Aorta (tissue), 5 donors: ENCODE measurements at regions of chr12 and their contacts with region 1.

Region 1: DNA sequence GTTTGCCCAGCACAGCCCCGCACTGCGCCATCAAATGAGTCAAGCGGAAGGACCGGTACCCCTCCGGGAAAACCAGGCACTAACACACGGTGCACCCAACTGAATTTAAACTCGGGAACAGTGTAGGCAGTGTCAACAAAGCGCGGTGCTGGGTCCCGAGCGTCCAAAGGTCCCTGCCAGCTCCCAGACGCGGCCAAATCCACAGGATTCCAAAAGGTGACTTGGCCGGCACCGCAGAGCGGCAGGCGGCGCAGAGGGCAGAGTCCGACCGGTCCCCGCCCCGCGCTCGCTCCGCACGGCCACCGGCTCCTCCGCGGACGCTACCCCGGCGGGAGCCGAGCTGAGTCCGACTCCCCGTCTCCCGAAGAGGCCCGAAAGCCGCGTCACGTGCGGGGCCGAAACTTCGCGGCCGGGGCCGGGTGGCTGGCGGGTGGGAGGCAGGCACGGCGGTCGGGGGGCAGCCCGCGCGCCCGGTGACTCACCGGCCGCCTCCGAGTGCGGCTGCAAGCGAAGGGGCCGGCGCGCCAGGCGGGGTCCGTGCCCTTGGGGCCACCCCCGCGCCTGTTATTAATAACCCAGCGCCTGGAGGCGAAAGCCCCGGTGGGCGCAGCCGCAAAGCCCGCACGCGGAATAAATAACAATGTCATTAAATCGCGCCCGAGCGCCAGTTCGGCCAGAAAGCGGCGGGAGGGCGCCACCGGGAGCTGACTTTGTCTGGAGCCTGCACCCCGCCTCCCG is 863 bp downstream of the DENND5B start:
- DNase-seq: peak; percentile 69 to 93
- ATAC-seq: peak; percentile 82
- H3K4me3 ChIP-seq: peak overlapping the region; percentile 98 to 99
- H3K27ac ChIP-seq: peak overlapping the region; percentile 52 to 95
- H3K4me1 ChIP-seq: no peaks in the 10 kb centered on the region
- H3K27me3 ChIP-seq: no peaks in the 10 kb centered on the region

Region 2: DNA sequence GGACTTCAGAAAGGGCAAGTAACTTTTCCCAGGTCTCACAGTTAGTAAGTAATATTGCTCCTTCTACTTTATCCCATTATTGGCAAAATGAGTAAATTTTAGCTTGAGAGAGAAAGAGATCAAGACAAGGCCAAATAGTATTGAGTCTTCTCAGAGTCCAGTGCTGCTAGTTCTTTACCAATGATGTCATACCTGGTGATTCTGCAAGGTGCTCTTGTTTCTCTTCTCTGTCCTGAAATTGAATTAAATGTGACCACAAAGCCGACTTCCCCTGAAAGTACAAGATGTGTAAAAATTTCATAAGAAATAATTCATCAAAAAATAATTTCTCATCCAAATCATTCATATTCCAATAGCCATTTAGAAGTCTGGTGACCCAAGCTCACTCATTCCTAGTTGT is 166.7 kb before region 1 on chr12:
- intact Hi-C with region 1: no loop called
- DNase-seq: no peak
- ATAC-seq: no peak
- H3K4me3 ChIP-seq: no peak overlapping the region
- H3K27ac ChIP-seq: no peak overlapping the region
- H3K4me1 ChIP-seq: no peaks in the 10 kb centered on the region
- H3K27me3 ChIP-seq: no peaks in the 10 kb centered on the region

Region 3: GRCh38 chr12:31506515-31507306 is 83.4 kb before region 1 on chr12:
- intact Hi-C with region 1: loop called in 1 of 2 experiments (anchors 10 kb)
- DNase-seq: no peak
- ATAC-seq: no peak
- H3K4me3 ChIP-seq: no peak overlapping the region
- H3K27ac ChIP-seq: no peak overlapping the region
- H3K4me1 ChIP-seq: peaks cover 0 to 2% of the 10 kb centered on the region in 2 donors
- H3K27me3 ChIP-seq: no peaks in the 10 kb centered on the region

Region 4: GRCh38 chr12:31629756-31630732 is 40.0 kb after region 1 on chr12:
- intact Hi-C with region 1: loop called in 1 of 2 experiments (anchors 5 kb)
- DNase-seq: peak in 1 of 2 donors; percentile 57
- ATAC-seq: peak; percentile 53
- H3K4me3 ChIP-seq: no peak overlapping the region
- H3K27ac ChIP-seq: no peak overlapping the region
- H3K4me1 ChIP-seq: no peaks in the 10 kb centered on the region
- H3K27me3 ChIP-seq: no peaks in the 10 kb centered on the region